Endothelial cell of umbilical vein (primary cell): ENCODE measurements at regions of chr15 and their contacts with region 1.

Region 1: GRCh38 chr15:48616216-48616615 is 29.3 kb downstream of the FBN1 start:
- DNase-seq: no peak
- H3K4me3 ChIP-seq: no peak overlapping the region
- H3K27ac ChIP-seq: no peak overlapping the region
- H3K4me1 ChIP-seq: no peaks in the 10 kb centered on the region
- H3K27me3 ChIP-seq: no peaks in the 10 kb centered on the region
- CTCF ChIP-seq: no peak
- POLR2A ChIP-seq: no peak

Region 2: DNA sequence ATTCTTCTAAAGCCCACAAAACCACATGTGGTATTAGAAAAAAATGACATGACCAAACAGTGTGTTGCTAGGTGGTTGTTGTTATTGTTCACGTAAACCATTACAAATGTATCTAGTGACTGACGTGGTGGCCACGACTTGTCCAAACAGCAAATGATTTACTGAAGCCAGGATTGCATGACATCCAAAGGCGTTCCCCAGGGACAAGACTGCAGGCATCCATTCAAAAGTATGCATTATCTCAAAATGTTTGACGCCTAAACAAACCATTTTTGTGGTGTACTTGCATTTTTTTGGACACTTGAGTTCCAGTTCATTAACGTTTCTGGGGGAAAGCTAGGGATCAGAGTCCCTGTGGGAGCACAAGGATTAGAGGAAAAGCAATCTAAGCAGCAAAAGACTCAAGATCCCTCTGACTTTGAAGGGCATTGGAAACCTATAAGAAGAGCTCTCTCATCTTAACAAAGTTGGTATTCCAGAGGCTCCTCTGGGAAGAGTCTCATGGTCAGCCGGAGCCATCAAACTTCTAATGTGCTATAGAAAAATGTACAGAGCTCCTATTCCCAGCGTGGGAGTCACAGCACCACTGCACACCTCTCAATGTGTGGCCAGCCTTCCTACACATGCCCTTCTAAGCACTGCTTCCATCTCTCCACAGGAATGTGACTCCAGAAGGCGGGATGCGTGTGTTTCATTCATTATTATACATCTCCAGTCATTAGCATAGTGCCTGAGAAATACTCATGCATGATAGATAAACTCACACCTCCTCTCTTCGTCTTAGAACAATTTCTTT is 33.6 kb before region 1 on chr15:
- CTCF ChIA-PET with region 1: no interaction called
- POLR2A ChIA-PET with region 1: no interaction called
- dilution Hi-C with region 1: no loop called
- intact Hi-C with region 1: no loop called
- DNase-seq: no peak
- H3K4me3 ChIP-seq: no peak overlapping the region
- H3K27ac ChIP-seq: no peak overlapping the region
- H3K4me1 ChIP-seq: peaks cover 5% of the 10 kb centered on the region
- H3K27me3 ChIP-seq: no peaks in the 10 kb centered on the region
- CTCF ChIP-seq: no peak
- POLR2A ChIP-seq: no peak

Region 3: DNA sequence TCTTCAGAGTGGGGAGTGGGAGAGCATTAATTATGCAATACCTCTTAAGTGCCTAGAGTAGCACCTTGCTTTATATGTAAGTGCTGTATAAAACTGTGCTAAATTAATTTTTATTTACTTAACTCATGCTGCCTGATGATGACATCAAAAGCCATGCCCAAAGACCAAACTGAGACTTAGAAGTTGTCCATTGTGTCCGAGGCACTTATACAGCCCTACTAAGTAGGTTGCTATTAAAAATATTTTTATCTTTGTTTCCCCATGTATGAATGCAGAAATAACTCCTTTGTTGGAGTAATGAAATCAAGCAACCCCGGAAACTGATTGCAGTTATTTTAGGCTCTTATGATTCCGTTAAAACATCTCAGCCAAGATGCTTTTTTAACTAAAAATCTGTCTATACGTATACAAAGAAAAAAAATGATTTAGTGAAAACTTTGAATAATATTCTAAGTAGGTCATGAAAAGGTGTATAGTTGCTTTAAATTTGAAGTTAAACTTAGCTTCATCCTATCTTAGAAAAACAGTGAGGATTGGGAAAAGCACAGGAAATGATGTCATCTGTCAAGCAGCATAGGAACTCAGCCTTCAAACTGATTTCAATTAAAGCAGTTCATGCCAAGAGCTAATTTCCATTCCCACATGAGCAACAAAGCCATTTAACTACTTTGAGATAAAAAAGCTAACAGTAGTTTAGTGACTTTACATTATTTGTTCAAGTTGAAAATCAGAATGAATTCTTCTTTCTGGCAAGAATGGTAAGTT is 13.7 kb before region 1 on chr15:
- CTCF ChIA-PET with region 1: interaction called, 13 read pairs
- POLR2A ChIA-PET with region 1: no interaction called
- dilution Hi-C with region 1: no loop called
- intact Hi-C with region 1: no loop called
- DNase-seq: peak; percentile 91
- H3K4me3 ChIP-seq: peak overlapping the region in 1 of 3 experiments; percentile 13
- H3K27ac ChIP-seq: peak overlapping the region; percentile 71
- H3K4me1 ChIP-seq: peaks cover 26% of the 10 kb centered on the region
- H3K27me3 ChIP-seq: no peaks in the 10 kb centered on the region
- CTCF ChIP-seq: no peak
- POLR2A ChIP-seq: no peak

Region 4: GRCh38 chr15:48667701-48668100 is 51.5 kb after region 1 on chr15:
- CTCF ChIA-PET with region 1: no interaction called
- POLR2A ChIA-PET with region 1: no interaction called
- dilution Hi-C with region 1: no loop called
- intact Hi-C with region 1: no loop called
- DNase-seq: no peak
- H3K4me3 ChIP-seq: no peak overlapping the region
- H3K27ac ChIP-seq: no peak overlapping the region
- H3K4me1 ChIP-seq: peaks cover 3% of the 10 kb centered on the region
- H3K27me3 ChIP-seq: no peaks in the 10 kb centered on the region
- CTCF ChIP-seq: no peak
- POLR2A ChIP-seq: no peak

Region 5: DNA sequence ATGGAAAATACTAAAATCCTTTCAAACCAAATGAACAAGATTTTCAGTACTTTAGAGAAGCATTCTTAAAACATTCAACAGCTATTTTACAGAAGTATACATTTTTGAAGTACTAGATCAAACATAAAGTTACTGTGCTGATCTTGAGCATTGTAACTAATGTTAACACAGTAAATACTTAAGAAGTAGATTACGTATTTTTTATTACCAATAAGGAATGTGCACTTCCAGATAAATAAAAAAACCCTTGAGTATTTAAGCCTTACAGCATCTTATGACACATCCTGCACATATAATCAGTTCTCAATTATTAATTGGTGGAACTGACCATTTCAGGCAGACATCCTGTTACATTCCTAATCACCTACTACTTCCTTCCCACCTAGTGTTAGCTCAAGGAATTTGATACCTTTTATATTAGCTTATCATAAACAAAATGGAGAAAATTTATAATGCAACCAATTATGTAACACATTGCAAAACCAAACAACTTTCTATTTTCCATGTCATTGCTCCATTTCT is 506.4 kb after region 1 on chr15:
- CTCF ChIA-PET with region 1: no interaction called
- POLR2A ChIA-PET with region 1: no interaction called
- dilution Hi-C with region 1: no loop called
- intact Hi-C with region 1: no loop called
- DNase-seq: peak; percentile 37
- H3K4me3 ChIP-seq: no peak overlapping the region
- H3K27ac ChIP-seq: peak overlapping the region; percentile 29
- H3K4me1 ChIP-seq: peaks cover 15% of the 10 kb centered on the region
- H3K27me3 ChIP-seq: no peaks in the 10 kb centered on the region
- CTCF ChIP-seq: no peak
- POLR2A ChIP-seq: no peak